ENCODE measurements at regions of chr16 and their contacts with region 1.

Region 1: GRCh38 chr16:78230832-78231231 is 131.4 kb downstream of the WWOX start:
- DNase-seq: no peak
- H3K4me3 ChIP-seq: no peak overlapping the region
- H3K27ac ChIP-seq: no peak overlapping the region
- H3K4me1 ChIP-seq: peaks cover 13% of the 10 kb centered on the region
- H3K27me3 ChIP-seq: no peaks in the 10 kb centered on the region
- CTCF ChIP-seq: no peak

Region 2: DNA sequence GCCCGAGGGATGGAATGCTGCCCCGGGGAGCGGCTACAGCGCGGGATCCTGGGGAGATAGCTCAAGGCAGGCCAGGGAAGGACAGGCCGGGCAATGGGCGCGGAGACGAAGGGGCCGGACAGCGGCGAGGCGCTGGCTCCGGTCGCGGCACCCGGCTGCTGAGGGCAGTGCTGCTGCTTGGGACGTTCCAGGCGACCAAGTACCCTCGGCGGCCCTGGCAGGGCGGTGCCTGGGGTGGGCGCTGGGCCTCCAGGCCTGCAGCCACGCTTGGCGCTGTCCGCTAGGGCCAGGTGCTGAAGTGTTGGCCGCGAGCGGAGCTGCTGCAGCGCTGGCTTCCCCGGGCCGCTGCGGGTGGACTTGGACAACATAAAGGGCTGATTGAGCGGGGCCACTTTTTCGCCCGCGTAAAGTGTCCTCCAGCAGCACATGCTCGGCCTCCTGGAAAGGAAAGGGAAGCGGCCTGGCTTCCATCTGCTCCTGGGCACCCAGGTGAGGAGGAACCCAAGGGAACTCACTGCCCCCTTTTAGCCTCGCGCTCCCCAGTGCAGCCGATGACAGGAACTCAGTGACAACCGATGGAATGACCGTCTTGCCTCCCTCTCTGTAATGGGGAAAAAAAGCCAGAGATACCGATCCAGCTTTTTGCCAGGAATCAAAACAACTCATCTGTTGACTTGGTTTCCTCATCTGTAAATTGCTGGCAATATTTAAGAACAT is 184.8 kb before region 1 on chr16:
- intact Hi-C with region 1: no loop called
- DNase-seq: peak; percentile 60
- H3K4me3 ChIP-seq: peak overlapping the region; percentile 41
- H3K27ac ChIP-seq: no peak overlapping the region
- H3K4me1 ChIP-seq: peaks cover 3% of the 10 kb centered on the region
- H3K27me3 ChIP-seq: peaks cover 40% of the 10 kb centered on the region
- CTCF ChIP-seq: no peak

Region 3: GRCh38 chr16:78127130-78127529 is 103.7 kb before region 1 on chr16:
- intact Hi-C with region 1: loop called (anchors 5 kb)
- DNase-seq: no peak
- H3K4me3 ChIP-seq: peak overlapping the region; percentile 34
- H3K27ac ChIP-seq: peak overlapping the region; percentile 51
- H3K4me1 ChIP-seq: peaks cover 34% of the 10 kb centered on the region
- H3K27me3 ChIP-seq: no peaks in the 10 kb centered on the region
- CTCF ChIP-seq: no peak

Measured in left ventricle myocardium inferior (tissue), 1 donor.